CD8-positive, alpha-beta T cell (primary cell): ENCODE measurements at regions of chr6 and their contacts with region 1.

Region 1: GRCh38 chr6:26122793-26123674 is 35.8 kb downstream of the HFE start:
- DNase-seq: peak; percentile 73 to 99 (median 91)
- ATAC-seq: peak; percentile 54
- H3K4me3 ChIP-seq: peak overlapping the region; percentile 78 to 98
- H3K4me3 Mint-ChIP-seq: peak overlapping the region; percentile 94
- H3K27ac ChIP-seq: peak overlapping the region; percentile 87 to 94
- H3K27ac Mint-ChIP-seq: peak overlapping the region; percentile 99
- H3K4me1 ChIP-seq: peaks cover 20% of the 10 kb centered on the region
- H3K4me1 Mint-ChIP-seq: peaks cover 27% of the 10 kb centered on the region
- H3K27me3 ChIP-seq: no peaks in the 10 kb centered on the region
- H3K27me3 Mint-ChIP-seq: no peaks in the 10 kb centered on the region
- CTCF ChIP-seq: no peak

Region 2: DNA sequence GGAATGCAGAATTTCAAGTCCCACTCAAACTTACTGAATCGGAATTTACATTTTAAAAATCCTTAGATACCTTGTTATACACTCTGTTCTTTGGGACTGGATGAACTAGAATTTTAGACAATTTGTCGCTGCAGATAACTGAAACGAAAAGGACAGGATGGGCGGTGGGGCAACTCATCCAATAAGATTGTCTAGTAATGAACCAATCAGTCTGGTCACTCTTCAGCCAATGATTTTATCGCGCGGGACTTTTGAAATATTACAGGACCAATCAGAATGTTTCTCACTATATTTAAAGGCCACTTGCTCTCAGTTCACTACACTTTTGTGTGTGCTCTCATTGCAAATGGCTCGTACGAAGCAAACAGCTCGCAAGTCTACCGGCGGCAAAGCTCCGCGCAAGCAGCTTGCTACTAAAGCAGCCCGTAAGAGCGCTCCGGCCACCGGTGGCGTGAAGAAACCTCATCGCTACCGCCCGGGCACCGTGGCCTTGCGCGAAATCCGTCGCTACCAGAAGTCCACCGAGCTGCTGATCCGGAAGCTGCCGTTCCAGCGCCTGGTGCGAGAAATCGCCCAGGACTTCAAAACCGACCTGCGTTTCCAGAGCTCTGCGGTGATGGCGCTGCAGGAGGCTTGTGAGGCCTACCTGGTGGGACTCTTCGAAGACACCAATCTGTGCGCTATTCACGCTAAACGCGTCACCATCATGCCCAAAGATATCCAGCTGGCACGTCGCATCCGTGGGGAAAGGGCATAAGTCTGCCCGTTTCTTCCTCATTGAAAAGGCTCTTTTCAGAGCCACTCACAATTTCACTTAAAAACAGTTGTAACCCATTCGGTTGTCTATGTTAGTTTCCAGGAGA is 77.7 kb before region 1 on chr6:
- CTCF ChIA-PET with region 1: interaction called, 6 read pairs
- POLR2A ChIA-PET with region 1: interaction called, 188 read pairs
- intact Hi-C with region 1: loop called (anchors 1 kb)
- DNase-seq: peak; percentile 54 to 93 (median 79)
- ATAC-seq: peak; percentile 59
- H3K4me3 ChIP-seq: peak overlapping the region; percentile 67 to 76
- H3K4me3 Mint-ChIP-seq: peak overlapping the region; percentile 89
- H3K27ac ChIP-seq: peak overlapping the region; percentile 73 to 81
- H3K27ac Mint-ChIP-seq: peak overlapping the region; percentile 98
- H3K4me1 ChIP-seq: peaks cover 7% of the 10 kb centered on the region
- H3K4me1 Mint-ChIP-seq: peaks cover 14% of the 10 kb centered on the region
- H3K27me3 ChIP-seq: no peaks in the 10 kb centered on the region
- H3K27me3 Mint-ChIP-seq: no peaks in the 10 kb centered on the region
- CTCF ChIP-seq: no peak

Region 3: DNA sequence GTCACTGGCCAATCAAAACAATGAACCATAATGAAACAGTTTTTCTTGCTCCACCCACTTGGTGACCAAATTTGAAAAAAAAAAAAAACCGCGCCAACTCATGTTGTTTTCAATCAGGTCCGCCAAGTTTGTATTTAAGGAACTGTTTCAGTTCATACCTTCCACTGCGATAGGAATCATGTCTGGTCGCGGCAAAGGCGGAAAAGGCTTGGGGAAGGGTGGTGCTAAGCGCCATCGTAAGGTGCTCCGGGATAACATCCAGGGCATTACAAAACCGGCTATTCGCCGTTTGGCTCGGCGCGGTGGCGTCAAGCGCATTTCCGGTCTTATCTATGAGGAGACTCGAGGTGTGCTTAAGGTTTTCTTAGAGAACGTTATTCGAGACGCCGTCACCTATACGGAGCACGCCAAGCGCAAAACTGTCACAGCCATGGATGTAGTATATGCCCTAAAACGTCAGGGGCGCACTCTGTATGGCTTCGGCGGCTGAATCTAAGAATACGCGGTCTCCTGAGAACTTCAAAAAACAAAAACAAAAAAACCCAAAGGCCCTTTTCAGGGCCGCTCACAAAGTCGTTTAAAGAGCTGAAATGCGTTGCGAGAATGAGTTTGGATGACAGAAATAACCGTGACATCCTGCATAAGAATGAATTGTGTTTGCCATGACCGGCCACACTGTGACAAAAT is 19.1 kb before region 1 on chr6:
- CTCF ChIA-PET with region 1: interaction called, 7 read pairs
- POLR2A ChIA-PET with region 1: interaction called, 231 read pairs
- intact Hi-C with region 1: loop called (anchors 1 kb)
- DNase-seq: peak; percentile 84 to 97 (median 89)
- ATAC-seq: peak; percentile 91
- H3K4me3 ChIP-seq: peak overlapping the region; percentile 52 to 58
- H3K4me3 Mint-ChIP-seq: peak overlapping the region; percentile 85
- H3K27ac ChIP-seq: peak overlapping the region; percentile 85 to 92
- H3K27ac Mint-ChIP-seq: peak overlapping the region; percentile 98
- H3K4me1 ChIP-seq: peaks cover 7% of the 10 kb centered on the region
- H3K4me1 Mint-ChIP-seq: peaks cover 17% of the 10 kb centered on the region
- H3K27me3 ChIP-seq: no peaks in the 10 kb centered on the region
- H3K27me3 Mint-ChIP-seq: no peaks in the 10 kb centered on the region
- CTCF ChIP-seq: peak; percentile 67

Region 4: DNA sequence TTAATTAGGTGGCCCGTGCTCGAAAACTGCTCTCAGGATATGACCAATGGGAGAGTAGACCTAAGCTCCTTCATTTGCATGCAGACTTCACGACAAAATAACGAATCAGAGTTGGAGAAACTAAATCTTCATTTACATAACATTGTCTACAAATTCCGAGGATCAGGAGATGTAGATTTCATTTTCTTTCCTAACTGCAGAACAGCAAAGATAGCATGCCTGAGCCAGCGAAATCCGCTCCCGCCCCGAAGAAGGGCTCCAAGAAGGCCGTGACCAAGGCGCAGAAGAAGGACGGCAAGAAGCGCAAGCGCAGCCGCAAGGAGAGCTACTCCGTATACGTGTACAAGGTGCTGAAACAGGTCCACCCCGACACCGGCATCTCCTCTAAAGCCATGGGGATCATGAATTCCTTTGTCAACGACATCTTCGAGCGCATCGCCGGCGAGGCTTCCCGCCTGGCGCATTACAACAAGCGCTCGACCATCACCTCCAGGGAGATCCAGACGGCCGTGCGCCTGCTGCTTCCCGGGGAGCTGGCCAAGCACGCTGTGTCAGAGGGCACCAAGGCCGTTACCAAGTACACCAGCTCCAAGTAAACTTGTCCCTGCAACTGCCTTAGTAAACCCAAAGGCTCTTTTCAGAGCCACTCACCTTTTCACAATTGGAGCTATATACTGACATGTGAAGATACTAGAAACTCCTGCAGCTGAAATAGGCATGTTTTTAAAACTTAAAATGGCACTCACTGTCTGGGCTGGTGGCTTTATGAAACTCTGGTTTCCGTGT is 60.7 kb after region 1 on chr6:
- CTCF ChIA-PET with region 1: interaction called, 4 read pairs
- POLR2A ChIA-PET with region 1: interaction called, 97 read pairs
- intact Hi-C with region 1: no loop called
- DNase-seq: peak in 7 of 9 experiments; percentile 33 to 90 (median 59)
- ATAC-seq: peak; percentile 88
- H3K4me3 ChIP-seq: peak overlapping the region; percentile 60 to 71
- H3K4me3 Mint-ChIP-seq: peak overlapping the region; percentile 100
- H3K27ac ChIP-seq: peak overlapping the region; percentile 61 to 76
- H3K27ac Mint-ChIP-seq: peak overlapping the region; percentile 99
- H3K4me1 ChIP-seq: peaks cover 20% of the 10 kb centered on the region
- H3K4me1 Mint-ChIP-seq: peaks cover 42% of the 10 kb centered on the region
- H3K27me3 ChIP-seq: no peaks in the 10 kb centered on the region
- H3K27me3 Mint-ChIP-seq: no peaks in the 10 kb centered on the region
- CTCF ChIP-seq: no peak

Region 5: GRCh38 chr6:26223650-26224546 is 100.9 kb after region 1 on chr6:
- CTCF ChIA-PET with region 1: no interaction called
- POLR2A ChIA-PET with region 1: interaction called, 25 read pairs
- intact Hi-C with region 1: no loop called
- DNase-seq: peak in 8 of 9 experiments; percentile 42 to 90 (median 72)
- ATAC-seq: peak; percentile 85
- H3K4me3 ChIP-seq: peak overlapping the region; percentile 64 to 72
- H3K4me3 Mint-ChIP-seq: no peak overlapping the region
- H3K27ac ChIP-seq: peak overlapping the region; percentile 76 to 87
- H3K27ac Mint-ChIP-seq: no peak overlapping the region
- H3K4me1 ChIP-seq: peaks cover 20% of the 10 kb centered on the region
- H3K4me1 Mint-ChIP-seq: peaks cover 24% of the 10 kb centered on the region
- H3K27me3 ChIP-seq: no peaks in the 10 kb centered on the region
- H3K27me3 Mint-ChIP-seq: no peaks in the 10 kb centered on the region
- CTCF ChIP-seq: no peak

Region 6: GRCh38 chr6:26285143-26286134 is 162.4 kb after region 1 on chr6:
- CTCF ChIA-PET with region 1: no interaction called
- POLR2A ChIA-PET with region 1: interaction called, 41 read pairs
- intact Hi-C with region 1: loop called in 1 of 2 experiments (anchors 1 kb)
- DNase-seq: peak; percentile 83 to 99 (median 96)
- ATAC-seq: peak; percentile 82
- H3K4me3 ChIP-seq: peak overlapping the region; percentile 73 to 76
- H3K4me3 Mint-ChIP-seq: peak overlapping the region; percentile 91
- H3K27ac ChIP-seq: peak overlapping the region; percentile 89 to 96
- H3K27ac Mint-ChIP-seq: peak overlapping the region; percentile 97
- H3K4me1 ChIP-seq: peaks cover 14% of the 10 kb centered on the region
- H3K4me1 Mint-ChIP-seq: peaks cover 31% of the 10 kb centered on the region
- H3K27me3 ChIP-seq: no peaks in the 10 kb centered on the region
- H3K27me3 Mint-ChIP-seq: no peaks in the 10 kb centered on the region
- CTCF ChIP-seq: no peak

Region 7: DNA sequence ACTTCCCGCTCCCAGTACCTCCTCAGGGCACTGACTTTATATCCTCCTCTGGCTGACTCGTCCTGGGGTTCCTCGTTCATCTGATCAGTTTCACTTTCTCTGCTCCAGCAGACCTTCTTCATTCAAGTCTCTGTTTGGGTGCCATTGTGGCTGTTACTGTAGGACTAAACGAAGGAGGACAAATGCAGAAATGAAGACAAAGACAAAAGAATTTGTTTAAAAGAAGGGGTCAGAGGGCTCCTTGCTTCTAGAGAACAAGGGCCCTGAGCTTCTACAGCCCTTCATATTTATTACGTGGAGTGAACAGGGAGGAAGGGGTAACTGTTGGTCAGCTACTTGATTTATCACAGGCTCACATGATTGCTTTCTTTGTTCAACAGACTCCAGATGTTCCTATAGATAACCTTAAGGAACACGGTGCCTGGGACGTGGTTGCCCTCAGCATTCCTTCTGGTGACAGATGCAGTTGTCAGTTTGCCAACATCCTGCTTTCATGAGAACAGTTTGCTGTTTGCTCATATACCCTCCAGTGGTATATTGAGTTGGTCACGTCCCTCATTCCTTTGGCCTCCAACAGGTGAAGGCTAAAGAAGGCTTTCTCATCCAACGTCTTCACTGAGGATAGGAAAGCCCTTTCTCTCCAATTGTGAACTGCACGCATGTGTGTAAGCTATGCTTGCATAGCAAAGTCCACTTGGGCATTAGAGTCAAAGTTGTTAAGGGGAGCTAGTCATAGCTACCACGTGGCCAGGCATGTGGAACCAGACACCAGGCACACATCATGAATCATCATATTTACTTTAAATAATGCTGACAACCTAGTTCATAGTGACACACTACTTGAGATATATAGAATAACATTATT is 172.9 kb after region 1 on chr6:
- CTCF ChIA-PET with region 1: no interaction called
- POLR2A ChIA-PET with region 1: no interaction called
- intact Hi-C with region 1: no loop called
- DNase-seq: no peak
- ATAC-seq: no peak
- H3K4me3 ChIP-seq: no peak overlapping the region
- H3K4me3 Mint-ChIP-seq: peak overlapping the region; percentile 20
- H3K27ac ChIP-seq: no peak overlapping the region
- H3K27ac Mint-ChIP-seq: no peak overlapping the region
- H3K4me1 ChIP-seq: no peaks in the 10 kb centered on the region
- H3K4me1 Mint-ChIP-seq: no peaks in the 10 kb centered on the region
- H3K27me3 ChIP-seq: no peaks in the 10 kb centered on the region
- H3K27me3 Mint-ChIP-seq: no peaks in the 10 kb centered on the region
- CTCF ChIP-seq: no peak

Region 8: DNA sequence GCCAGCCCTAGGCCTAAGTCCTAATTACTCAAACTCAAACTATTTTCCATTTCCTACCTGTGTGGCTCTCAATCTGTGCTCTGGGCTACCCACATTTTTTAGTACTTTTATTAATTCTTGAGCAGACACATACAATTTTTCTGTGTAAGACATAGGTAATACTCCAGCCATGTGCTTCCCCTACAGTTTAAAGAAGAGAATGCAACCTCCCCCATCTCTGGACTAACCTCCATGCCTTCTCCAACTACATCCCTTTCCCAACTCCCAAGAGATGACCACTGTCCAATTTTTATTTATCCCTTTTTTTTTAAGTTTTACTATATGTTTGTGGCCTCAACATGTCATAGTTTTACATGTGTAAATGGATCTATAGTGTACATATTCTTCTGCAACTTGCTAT is 420.9 kb after region 1 on chr6:
- CTCF ChIA-PET with region 1: no interaction called
- POLR2A ChIA-PET with region 1: no interaction called
- intact Hi-C with region 1: no loop called
- DNase-seq: peak in 2 of 9 experiments; percentile 36 to 43
- ATAC-seq: peak; percentile 84
- H3K4me3 ChIP-seq: no peak overlapping the region
- H3K4me3 Mint-ChIP-seq: no peak overlapping the region
- H3K27ac ChIP-seq: no peak overlapping the region
- H3K27ac Mint-ChIP-seq: peak overlapping the region; percentile 34
- H3K4me1 ChIP-seq: peaks cover 11% of the 10 kb centered on the region
- H3K4me1 Mint-ChIP-seq: peaks cover 42% of the 10 kb centered on the region
- H3K27me3 ChIP-seq: no peaks in the 10 kb centered on the region
- H3K27me3 Mint-ChIP-seq: no peaks in the 10 kb centered on the region
- CTCF ChIP-seq: peak; percentile 60

Region 9: GRCh38 chr6:27825025-27825793 is 1702.2 kb after region 1 on chr6:
- CTCF ChIA-PET with region 1: no interaction called
- POLR2A ChIA-PET with region 1: interaction called, 15 read pairs
- intact Hi-C with region 1: no loop called
- DNase-seq: peak in 1 of 9 experiments; percentile 45
- ATAC-seq: peak; percentile 6
- H3K4me3 ChIP-seq: peak overlapping the region; percentile 55 to 76
- H3K4me3 Mint-ChIP-seq: peak overlapping the region; percentile 89
- H3K27ac ChIP-seq: peak overlapping the region; percentile 81 to 91
- H3K27ac Mint-ChIP-seq: peak overlapping the region; percentile 99
- H3K4me1 ChIP-seq: peaks cover 24% of the 10 kb centered on the region
- H3K4me1 Mint-ChIP-seq: peaks cover 32% of the 10 kb centered on the region
- H3K27me3 ChIP-seq: no peaks in the 10 kb centered on the region
- H3K27me3 Mint-ChIP-seq: no peaks in the 10 kb centered on the region
- CTCF ChIP-seq: no peak